PC-9 (cell line): ENCODE measurements at regions of chr12 and their contacts with region 1.

Region 1: GRCh38 chr12:22684140-22685118 is 59.5 kb downstream of the ETNK1 start:
- DNase-seq: no peak
- H3K4me3 ChIP-seq: no peak overlapping the region
- H3K27ac ChIP-seq: no peak overlapping the region
- H3K4me1 ChIP-seq: no peaks in the 10 kb centered on the region
- H3K27me3 ChIP-seq: no peaks in the 10 kb centered on the region
- CTCF ChIP-seq: peak; percentile 76

Region 2: DNA sequence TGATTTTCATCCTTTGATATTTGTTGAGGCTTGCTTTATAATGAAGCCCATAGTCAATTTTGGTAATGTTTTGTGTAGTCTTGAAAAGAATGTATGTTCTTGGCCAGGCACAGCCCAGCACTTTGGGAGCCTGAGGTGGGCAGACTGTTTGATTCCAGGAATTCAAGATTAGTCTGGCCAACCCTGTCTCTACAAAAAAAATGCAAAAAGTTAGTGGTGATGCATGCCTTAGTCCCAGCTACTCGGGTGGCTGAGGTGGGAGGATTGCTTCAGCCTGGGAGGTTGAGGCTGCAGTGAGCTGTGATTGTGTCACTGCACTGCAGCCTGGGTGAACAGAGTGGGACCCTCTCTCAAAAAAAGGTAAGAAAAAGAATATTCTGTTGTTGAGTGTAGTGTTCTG is 48.6 kb before region 1 on chr12:
- CTCF ChIA-PET with region 1: no interaction called
- POLR2A ChIA-PET with region 1: interaction called, 8 read pairs
- intact Hi-C with region 1: loop called (anchors 1 kb)
- DNase-seq: no peak
- H3K4me3 ChIP-seq: no peak overlapping the region
- H3K27ac ChIP-seq: no peak overlapping the region
- H3K4me1 ChIP-seq: no peaks in the 10 kb centered on the region
- H3K27me3 ChIP-seq: no peaks in the 10 kb centered on the region
- CTCF ChIP-seq: no peak

Region 3: GRCh38 chr12:22712083-22712482 is 27.7 kb after region 1 on chr12:
- CTCF ChIA-PET with region 1: no interaction called
- POLR2A ChIA-PET with region 1: no interaction called
- intact Hi-C with region 1: no loop called
- DNase-seq: no peak
- H3K4me3 ChIP-seq: no peak overlapping the region
- H3K27ac ChIP-seq: no peak overlapping the region
- H3K4me1 ChIP-seq: no peaks in the 10 kb centered on the region
- H3K27me3 ChIP-seq: peaks cover 9% of the 10 kb centered on the region; the same call in 1 of the 2 replicates
- CTCF ChIP-seq: no peak